Gastrocnemius medialis (tissue), 4 donors: ENCODE measurements at regions of chr1 and their contacts with region 1.

Region 1: DNA sequence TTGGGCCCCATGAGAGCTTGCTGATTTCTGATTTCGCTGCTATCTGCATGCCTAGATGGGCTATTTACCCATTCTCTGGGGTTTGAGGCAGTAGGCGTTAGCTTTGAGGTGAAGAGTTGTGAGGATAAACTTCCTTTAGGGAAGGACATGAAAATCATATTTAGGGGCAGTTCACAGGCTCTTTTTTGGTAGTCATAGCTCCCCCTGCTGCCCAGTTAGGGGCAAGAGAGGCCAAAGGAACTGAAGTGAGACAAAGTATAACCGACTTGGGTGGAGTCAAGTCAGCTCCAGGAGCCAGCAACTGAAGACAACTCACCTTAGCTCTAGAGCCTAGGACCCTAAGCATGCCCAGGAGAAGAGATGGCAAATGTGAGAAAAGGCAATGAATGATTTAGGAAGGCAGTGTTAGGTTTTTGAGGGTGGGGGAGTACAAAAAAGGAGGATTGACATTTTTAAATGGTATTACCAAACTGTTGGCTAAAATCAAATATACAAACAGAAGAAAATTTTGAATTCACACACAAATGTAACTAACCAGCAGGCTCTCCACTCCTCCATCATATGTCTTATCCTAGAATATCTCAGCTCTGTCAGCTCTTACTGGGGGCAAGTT is 625.2 kb downstream of the LMO4 start:
- DNase-seq: peak; percentile 7 to 48
- ATAC-seq: peak; percentile 65 to 69
- H3K4me3 ChIP-seq: no peak overlapping the region
- H3K27ac ChIP-seq: no peak overlapping the region
- H3K4me1 ChIP-seq: no peaks in the 10 kb centered on the region
- H3K27me3 ChIP-seq: no peaks in the 10 kb centered on the region
- CTCF ChIP-seq: peak; percentile 30 to 69 (median 64)
- POLR2A ChIP-seq: no peak

Region 2: DNA sequence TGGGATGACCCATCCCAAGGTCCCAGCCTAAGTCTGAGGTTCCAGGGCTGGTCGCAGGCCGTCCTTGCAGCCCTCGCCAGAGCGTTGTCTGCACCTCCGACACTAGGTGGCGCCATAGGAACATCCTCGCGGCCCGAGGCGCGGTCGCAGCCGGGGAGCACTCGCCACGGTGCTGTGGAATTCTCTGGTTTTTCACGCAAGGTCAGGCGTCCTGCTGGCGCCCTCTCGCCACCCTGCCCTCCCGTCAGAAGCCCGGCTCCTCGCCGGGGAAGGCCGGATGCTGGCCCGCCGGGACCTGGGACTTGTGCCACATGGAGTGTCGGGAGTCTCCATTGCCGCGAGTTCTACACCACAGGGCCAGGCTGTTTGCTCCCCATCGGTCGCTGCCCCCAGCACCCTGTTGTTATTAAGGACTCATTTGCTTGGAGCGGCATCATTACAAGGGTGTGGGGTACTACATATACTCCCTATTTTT is 822.0 kb before region 1 on chr1:
- in situ Hi-C with region 1: loop called in 2 of 4 experiments (anchors 25 kb)
- intact Hi-C with region 1: loop called (anchors 5 kb)
- DNase-seq: peak; percentile 44 to 54
- ATAC-seq: peak; percentile 73 to 84
- H3K4me3 ChIP-seq: peak overlapping the region; percentile 48 to 75 (median 60)
- H3K27ac ChIP-seq: peak overlapping the region; percentile 37 to 56 (median 48)
- H3K4me1 ChIP-seq: no peaks in the 10 kb centered on the region
- H3K27me3 ChIP-seq: no peaks in the 10 kb centered on the region
- CTCF ChIP-seq: peak; percentile 44 to 91 (median 76)
- POLR2A ChIP-seq: no peak

Region 3: GRCh38 chr1:87478231-87478630 is 475.6 kb before region 1 on chr1:
- in situ Hi-C with region 1: no loop called
- intact Hi-C with region 1: loop called (anchors 10 kb)
- DNase-seq: peak in 1 of 2 donors; percentile 36
- ATAC-seq: peak in 1 of 2 donors; percentile 42
- H3K4me3 ChIP-seq: no peak overlapping the region
- H3K27ac ChIP-seq: no peak overlapping the region
- H3K4me1 ChIP-seq: no peaks in the 10 kb centered on the region
- H3K27me3 ChIP-seq: no peaks in the 10 kb centered on the region
- CTCF ChIP-seq: no peak
- POLR2A ChIP-seq: no peak

Region 4: GRCh38 chr1:87805666-87806378 is 148.0 kb before region 1 on chr1:
- in situ Hi-C with region 1: no loop called
- intact Hi-C with region 1: no loop called
- DNase-seq: no peak
- ATAC-seq: no peak
- H3K4me3 ChIP-seq: no peak overlapping the region
- H3K27ac ChIP-seq: no peak overlapping the region
- H3K4me1 ChIP-seq: no peaks in the 10 kb centered on the region
- H3K27me3 ChIP-seq: no peaks in the 10 kb centered on the region
- CTCF ChIP-seq: no peak
- POLR2A ChIP-seq: no peak

Region 5: DNA sequence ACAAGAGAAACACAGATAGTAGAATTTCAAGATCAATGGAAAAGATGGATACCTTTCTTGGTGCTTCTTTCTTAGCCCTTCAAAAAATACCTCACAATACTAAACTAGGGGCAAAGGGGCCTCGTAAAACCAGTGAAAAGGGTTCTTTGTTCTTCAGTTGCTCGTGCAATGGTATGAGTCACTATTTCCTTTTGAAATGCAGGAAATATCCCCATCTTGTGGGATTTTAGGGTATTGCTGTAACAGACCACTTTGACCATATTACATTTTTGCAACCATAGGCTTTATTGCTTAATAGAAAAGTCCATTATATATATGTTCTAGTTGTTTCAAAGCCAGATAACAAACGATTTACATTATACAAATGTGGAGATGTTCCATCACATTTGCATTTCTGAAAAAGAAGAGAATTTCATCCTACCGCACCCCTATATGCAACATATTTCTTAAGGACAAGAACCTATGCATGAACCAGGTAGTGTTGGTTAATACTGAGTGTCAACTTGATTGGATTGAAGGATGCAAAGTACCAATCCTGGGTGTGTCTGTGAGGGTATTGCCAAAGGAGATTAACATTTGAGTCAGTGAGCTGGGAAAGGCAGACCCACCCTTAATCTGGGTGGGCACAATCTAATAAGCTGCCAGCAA is 641.6 kb after region 1 on chr1:
- in situ Hi-C with region 1: no loop called
- intact Hi-C with region 1: no loop called
- DNase-seq: no peak
- ATAC-seq: no peak
- H3K4me3 ChIP-seq: no peak overlapping the region
- H3K27ac ChIP-seq: no peak overlapping the region
- H3K4me1 ChIP-seq: no peaks in the 10 kb centered on the region
- H3K27me3 ChIP-seq: no peaks in the 10 kb centered on the region
- CTCF ChIP-seq: no peak
- POLR2A ChIP-seq: no peak